PC-9 (cell line): ENCODE measurements at regions of chr1 and their contacts with region 1.

Region 1: DNA sequence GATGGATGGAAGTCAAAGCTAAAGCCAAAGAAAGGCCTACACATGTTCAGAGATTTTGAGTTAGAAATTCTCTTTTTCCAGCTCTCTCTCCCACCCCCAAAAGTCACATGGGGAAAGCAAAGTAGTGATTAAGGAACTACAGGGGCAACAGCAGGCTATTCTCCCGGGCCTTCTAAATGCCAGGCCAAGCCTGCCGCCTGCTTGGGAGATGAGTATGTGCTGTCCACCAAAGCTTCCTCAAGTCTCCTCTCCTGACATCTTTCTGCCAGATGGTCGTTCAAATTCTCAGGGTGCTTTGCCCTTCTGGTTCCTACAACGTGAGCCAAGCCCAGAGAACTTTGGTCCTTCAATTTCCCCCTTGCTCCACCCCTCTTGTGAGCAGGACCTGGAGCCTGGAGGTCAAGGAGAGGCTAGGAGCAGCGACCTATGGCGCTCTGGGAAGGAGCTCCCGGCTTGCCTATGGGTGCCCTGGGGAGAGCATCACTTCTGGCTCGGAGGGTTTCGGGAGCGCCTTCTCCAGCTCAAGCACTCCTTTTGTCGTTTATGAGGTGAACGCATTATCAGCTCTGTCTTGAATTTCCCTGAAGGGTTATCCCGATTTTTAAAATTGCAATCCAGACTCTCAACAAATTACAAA is 4.4 kb upstream of the PRRX1 start:
- DNase-seq: no peak
- H3K4me3 ChIP-seq: no peak overlapping the region
- H3K27ac ChIP-seq: no peak overlapping the region
- H3K4me1 ChIP-seq: no peaks in the 10 kb centered on the region
- H3K27me3 ChIP-seq: peaks cover 8% of the 10 kb centered on the region
- CTCF ChIP-seq: no peak

Region 2: GRCh38 chr1:170219163-170219562 is 440.4 kb before region 1 on chr1:
- CTCF ChIA-PET with region 1: interaction called, 12 read pairs
- POLR2A ChIA-PET with region 1: no interaction called
- intact Hi-C with region 1: no loop called
- DNase-seq: no peak
- H3K4me3 ChIP-seq: no peak overlapping the region
- H3K27ac ChIP-seq: no peak overlapping the region
- H3K4me1 ChIP-seq: no peaks in the 10 kb centered on the region
- H3K27me3 ChIP-seq: peaks cover 11% of the 10 kb centered on the region; the same call in 1 of the 2 replicates
- CTCF ChIP-seq: no peak

Region 3: DNA sequence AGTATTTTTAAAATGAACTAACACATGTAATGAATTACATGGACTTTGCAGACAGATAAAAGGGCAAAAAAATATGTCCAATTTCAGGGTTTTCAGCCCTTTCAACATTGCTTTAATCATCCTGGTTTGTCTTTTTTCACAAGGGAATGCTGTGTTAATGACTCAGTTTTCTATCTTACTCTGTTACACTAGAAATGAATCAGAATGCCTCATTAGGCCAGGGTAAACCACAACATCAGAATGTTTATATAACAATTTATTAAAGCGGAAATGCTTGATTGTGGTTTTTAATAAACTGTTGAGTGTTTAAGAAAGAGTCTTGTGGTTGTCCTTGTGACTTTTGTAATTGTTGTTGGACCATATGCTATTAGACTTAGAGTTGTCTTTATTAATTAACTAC is 114.0 kb before region 1 on chr1:
- CTCF ChIA-PET with region 1: no interaction called
- POLR2A ChIA-PET with region 1: no interaction called
- intact Hi-C with region 1: no loop called
- DNase-seq: no peak
- H3K4me3 ChIP-seq: no peak overlapping the region
- H3K27ac ChIP-seq: no peak overlapping the region
- H3K4me1 ChIP-seq: no peaks in the 10 kb centered on the region
- H3K27me3 ChIP-seq: no peaks in the 10 kb centered on the region
- CTCF ChIP-seq: no peak